Brain microvascular endothelial cell (primary cell): ENCODE measurements at regions of chr19 and their contacts with region 1.

Region 1: DNA sequence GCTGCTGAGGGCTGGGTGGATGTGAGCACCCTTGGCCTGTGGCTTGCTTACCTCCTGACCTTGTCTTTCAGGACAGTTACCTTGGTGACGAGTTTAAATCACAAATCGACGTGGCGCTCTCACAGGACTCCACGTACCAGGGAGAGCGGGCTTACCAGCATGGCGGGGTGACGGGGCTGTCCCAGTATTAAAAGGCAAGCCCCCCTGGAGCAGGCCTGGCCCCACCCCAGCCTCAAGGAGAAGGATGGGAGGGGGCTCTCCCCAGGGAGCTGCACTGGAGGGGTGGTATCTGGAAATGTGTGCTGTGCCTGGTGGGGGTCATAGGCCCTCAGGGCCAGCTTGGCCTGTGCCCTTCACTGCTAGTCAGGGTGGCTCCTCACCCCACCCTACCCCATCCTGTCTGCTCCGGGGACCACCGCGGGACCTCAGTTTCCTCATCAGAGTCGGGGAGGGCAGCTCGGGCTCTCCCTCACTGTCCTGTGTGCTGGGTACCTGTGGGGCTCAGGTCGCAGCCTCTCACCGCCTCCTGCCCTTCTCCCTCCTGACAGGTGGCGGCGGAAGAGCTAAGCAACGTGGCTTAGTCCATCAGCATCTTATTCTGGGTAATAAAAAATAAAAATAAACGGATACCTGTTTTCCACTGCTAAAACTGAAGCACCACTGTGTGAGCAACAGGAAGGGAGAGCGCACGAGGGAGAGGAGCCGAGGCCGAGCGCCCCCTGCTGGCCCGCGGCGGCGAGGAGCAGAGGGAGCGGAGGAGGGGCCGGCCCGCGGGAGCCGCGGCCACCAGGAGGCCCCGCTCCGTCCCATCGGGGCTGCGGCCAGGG is 29.8 kb downstream of the CERS1 start:
- DNase-seq: peak; percentile 31
- H3K4me3 ChIP-seq: no peak overlapping the region
- H3K27ac ChIP-seq: no peak overlapping the region
- H3K27me3 ChIP-seq: peaks cover 10% of the 10 kb centered on the region
- CTCF ChIP-seq: peak; percentile 82

Region 2: GRCh38 chr19:18588611-18589379 is 277.4 kb before region 1 on chr19 and contains the start of gene REX1BD:
- in situ Hi-C with region 1: loop called (anchors 25 kb)
- DNase-seq: peak; percentile 54
- H3K4me3 ChIP-seq: peak within 1 kb of the TSS; percentile 71
- H3K27ac ChIP-seq: peak within 1 kb of the TSS; percentile 73
- H3K27me3 ChIP-seq: no peaks in the 10 kb centered on the region
- CTCF ChIP-seq: peak; percentile 85

Region 3: GRCh38 chr19:19010551-19010950 is 144.4 kb after region 1 on chr19:
- in situ Hi-C with region 1: no loop called
- DNase-seq: no peak
- H3K4me3 ChIP-seq: no peak overlapping the region
- H3K27ac ChIP-seq: no peak overlapping the region
- H3K27me3 ChIP-seq: no peaks in the 10 kb centered on the region
- CTCF ChIP-seq: no peak